ENCODE measurements at regions of chr2 and their contacts with region 1.

Region 1: GRCh38 chr2:219968685-219969345 is 341.4 kb downstream of the SLC4A3 start:
- DNase-seq: peak; percentile 97
- ATAC-seq: peak; percentile 95
- H3K4me3 ChIP-seq: peak overlapping the region; percentile 48; the same call in 1 of the 2 replicates
- H3K27ac ChIP-seq: peak overlapping the region; percentile 94
- H3K4me1 ChIP-seq: peaks cover 25% of the 10 kb centered on the region
- H3K27me3 ChIP-seq: no peaks in the 10 kb centered on the region
- CTCF ChIP-seq: no peak

Region 2: DNA sequence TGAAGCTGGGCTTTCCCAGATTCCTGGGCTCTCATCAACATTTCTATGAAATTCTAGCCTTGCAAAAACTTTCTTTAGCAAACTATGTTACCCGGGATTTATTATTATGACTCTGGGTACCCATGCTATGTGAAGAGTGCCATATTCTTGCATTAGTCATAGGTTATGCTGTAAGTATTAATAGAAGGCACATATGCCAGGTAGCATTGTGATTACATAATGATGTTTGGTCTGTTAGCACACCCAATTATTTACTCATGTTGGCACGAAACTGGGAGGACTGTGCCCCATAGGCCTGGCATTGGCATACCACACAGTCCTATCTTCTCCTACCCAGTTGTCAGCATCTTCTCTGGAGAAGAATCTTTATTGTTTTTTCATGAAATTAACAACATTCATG is 170.4 kb before region 1 on chr2:
- CTCF ChIA-PET with region 1: no interaction called
- POLR2A ChIA-PET with region 1: interaction called, 10 read pairs
- intact Hi-C with region 1: no loop called
- DNase-seq: no peak
- ATAC-seq: no peak; the same call in 1 of the 2 replicates
- H3K4me3 ChIP-seq: no peak overlapping the region
- H3K27ac ChIP-seq: no peak overlapping the region
- H3K4me1 ChIP-seq: peaks cover 5% of the 10 kb centered on the region; the same call in 1 of the 2 replicates
- H3K27me3 ChIP-seq: no peaks in the 10 kb centered on the region
- CTCF ChIP-seq: no peak

Region 3: DNA sequence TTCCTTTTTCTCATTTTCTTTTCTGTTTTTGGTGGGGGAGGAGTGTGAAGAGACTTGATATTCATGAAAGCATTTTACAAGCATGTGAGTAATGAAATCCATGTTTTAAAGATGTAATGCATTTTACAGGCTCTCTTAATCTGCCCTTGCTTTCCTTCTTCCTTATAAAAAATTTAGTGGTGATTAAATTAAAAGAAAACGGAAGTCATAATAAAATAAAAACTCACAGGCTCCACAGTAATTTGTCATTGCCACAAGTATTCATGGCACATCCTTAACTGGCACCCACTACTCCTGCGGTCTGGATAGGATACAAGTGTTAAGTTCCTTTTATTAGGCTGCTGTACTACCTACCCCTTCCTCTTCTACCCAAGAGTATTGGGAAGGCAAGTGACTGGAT is 100.2 kb before region 1 on chr2:
- CTCF ChIA-PET with region 1: no interaction called
- POLR2A ChIA-PET with region 1: no interaction called
- intact Hi-C with region 1: loop called (anchors 5 kb)
- DNase-seq: peak; percentile 65
- ATAC-seq: peak; percentile 88
- H3K4me3 ChIP-seq: no peak overlapping the region
- H3K27ac ChIP-seq: no peak overlapping the region
- H3K4me1 ChIP-seq: peaks cover 19% of the 10 kb centered on the region
- H3K27me3 ChIP-seq: no peaks in the 10 kb centered on the region
- CTCF ChIP-seq: no peak

Measured in PC-3 (cell line).